Calu3 (cell line): ENCODE measurements at regions of chr10 and their contacts with region 1.

Region 1: DNA sequence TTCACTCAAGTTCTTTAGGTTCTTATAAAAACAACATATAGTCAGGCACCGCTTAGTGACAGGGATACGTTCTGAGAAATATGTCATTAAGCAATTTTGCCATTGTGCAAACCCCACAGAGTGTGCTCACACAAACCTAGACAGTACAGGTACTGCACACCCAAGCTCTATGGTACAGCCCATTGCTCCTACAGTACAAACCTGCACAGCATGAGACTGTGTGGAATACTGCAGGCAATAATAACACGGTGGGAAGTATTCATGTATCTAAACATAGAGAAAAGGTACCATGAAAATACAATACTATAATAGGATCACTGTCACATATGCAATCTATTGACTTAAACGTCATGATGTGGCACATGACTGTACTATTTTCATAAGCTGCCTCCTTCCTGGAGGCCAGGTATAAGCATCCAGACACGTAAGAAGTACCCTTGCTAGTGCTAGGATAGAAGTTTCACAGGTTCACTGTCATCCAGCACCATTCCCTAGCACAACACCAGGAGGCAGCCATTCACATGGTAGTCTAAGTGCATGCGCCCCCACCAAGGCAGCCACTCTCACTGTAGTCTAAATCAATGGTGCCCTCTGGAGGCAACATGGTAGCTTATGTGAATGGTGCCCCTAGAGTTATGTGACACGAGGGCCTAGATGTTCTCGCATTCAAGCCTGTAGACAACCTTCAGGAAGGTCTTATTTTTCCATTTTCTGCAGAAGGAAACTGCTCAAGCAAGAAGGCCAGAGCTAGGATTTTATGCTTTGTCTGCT is 98.5 kb downstream of the ARHGAP22 start:
- DNase-seq: peak; percentile 51
- H3K4me3 Mint-ChIP-seq: no peak overlapping the region
- H3K27ac Mint-ChIP-seq: no peak overlapping the region
- H3K4me1 Mint-ChIP-seq: no peaks in the 10 kb centered on the region
- H3K27me3 Mint-ChIP-seq: no peaks in the 10 kb centered on the region
- CTCF ChIP-seq: peak; percentile 32

Region 2: DNA sequence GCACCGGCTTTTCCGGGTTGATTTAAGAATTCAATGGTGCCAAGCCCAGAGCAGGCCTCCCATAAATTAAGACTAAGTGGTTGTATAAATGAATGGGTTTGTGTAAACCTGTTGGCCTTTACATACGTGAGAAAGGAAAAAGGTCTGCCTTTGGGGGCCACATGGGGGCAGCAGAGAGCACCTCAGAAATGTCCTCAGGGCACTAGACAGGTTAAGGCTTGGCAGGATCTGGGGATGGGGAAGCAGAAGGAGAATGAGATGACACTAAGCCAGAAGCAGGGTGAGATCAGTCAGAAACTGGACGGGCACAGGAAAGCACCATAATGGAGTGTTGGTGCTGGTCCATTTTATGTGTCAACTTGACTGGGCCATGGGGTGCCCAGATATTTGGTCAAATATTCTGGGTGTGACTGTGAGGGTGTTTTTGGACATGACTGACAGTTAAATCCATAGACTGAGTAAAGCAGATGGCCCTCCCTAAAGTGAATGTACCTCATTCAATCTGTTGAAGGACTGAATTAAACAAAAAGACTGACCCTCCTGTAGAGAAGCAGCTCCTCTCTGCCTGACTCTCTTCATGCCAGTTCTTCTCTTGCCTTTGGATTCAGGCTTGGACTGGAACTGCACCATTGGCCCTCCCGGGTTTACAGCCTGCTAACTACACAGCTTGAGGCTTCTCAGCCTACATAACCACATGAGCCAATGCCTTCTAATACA is 290.7 kb before region 1 on chr10:
- CTCF ChIA-PET with region 1: no interaction called
- intact Hi-C with region 1: loop called (anchors 2 kb)
- DNase-seq: peak; percentile 73
- H3K4me3 Mint-ChIP-seq: no peak overlapping the region
- H3K27ac Mint-ChIP-seq: no peak overlapping the region
- H3K4me1 Mint-ChIP-seq: no peaks in the 10 kb centered on the region
- H3K27me3 Mint-ChIP-seq: peaks cover 69% of the 10 kb centered on the region
- CTCF ChIP-seq: peak; percentile 73

Region 3: DNA sequence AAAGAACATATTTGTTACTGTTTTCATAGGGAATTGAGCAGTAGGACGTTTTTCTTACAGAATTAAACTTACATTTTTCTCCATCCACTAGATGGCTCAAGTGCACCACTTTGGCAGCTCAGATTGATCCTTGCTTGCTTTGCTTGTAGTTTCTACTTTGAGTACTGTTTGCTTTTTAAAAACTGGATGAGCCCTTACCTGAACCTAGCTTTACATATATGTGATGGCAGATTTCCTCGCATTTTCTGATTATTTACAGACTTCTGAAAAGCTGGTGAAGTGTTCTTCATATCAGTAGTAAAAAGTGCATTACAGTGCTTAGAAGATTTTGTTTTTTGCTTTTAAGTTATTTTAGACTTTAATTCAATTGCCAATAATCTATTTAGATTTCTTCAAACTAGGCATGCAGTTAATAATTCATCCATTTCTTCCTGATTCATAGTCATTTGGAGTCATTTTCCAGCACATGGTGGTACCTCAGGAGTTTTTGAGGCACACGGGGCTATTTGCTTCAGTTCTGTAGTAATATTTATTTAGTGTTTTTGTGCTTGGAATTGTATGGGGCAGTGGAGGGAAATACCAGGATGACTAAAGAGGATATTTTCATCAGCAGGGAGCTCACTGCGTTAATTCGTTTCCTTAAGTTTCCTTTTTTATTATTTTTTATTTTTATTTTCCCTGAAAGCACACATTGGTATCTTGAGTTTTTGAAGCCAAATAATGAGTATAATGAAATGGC is 142.5 kb before region 1 on chr10:
- CTCF ChIA-PET with region 1: interaction called, 14 read pairs
- intact Hi-C with region 1: loop called (anchors 1 kb)
- DNase-seq: peak; percentile 44
- H3K4me3 Mint-ChIP-seq: peak overlapping the region; percentile 49
- H3K27ac Mint-ChIP-seq: peak overlapping the region; percentile 76
- H3K4me1 Mint-ChIP-seq: peaks cover 52% of the 10 kb centered on the region
- H3K27me3 Mint-ChIP-seq: no peaks in the 10 kb centered on the region
- CTCF ChIP-seq: peak; percentile 62

Region 4: GRCh38 chr10:48444266-48444665 is 62.1 kb before region 1 on chr10:
- CTCF ChIA-PET with region 1: interaction called, 12 read pairs
- intact Hi-C with region 1: loop called (anchors 2 kb)
- DNase-seq: no peak
- H3K4me3 Mint-ChIP-seq: no peak overlapping the region
- H3K27ac Mint-ChIP-seq: no peak overlapping the region
- H3K4me1 Mint-ChIP-seq: peaks cover 11% of the 10 kb centered on the region
- H3K27me3 Mint-ChIP-seq: peaks cover 9% of the 10 kb centered on the region
- CTCF ChIP-seq: no peak